A549 (cell line): ENCODE measurements at regions of chr5 and their contacts with region 1.

Region 1: GRCh38 chr5:139633295-139634027 is 14.7 kb upstream of the CXXC5 start:
- DNase-seq: peak; percentile 77 to 79
- ATAC-seq: peak; percentile 70 to 80
- H3K4me3 ChIP-seq: no peak overlapping the region
- H3K27ac ChIP-seq: peak overlapping the region in 1 of 2 experiments; percentile 51; a peak in 3 of 6 replicates
- H3K4me1 ChIP-seq: peaks cover 38% of the 10 kb centered on the region
- CTCF ChIP-seq: peak; percentile 95
- EP300 ChIP-seq: no peak
- POLR2A ChIP-seq: no peak
- RAD21 ChIP-seq: peak; percentile 94 to 95

Region 2: DNA sequence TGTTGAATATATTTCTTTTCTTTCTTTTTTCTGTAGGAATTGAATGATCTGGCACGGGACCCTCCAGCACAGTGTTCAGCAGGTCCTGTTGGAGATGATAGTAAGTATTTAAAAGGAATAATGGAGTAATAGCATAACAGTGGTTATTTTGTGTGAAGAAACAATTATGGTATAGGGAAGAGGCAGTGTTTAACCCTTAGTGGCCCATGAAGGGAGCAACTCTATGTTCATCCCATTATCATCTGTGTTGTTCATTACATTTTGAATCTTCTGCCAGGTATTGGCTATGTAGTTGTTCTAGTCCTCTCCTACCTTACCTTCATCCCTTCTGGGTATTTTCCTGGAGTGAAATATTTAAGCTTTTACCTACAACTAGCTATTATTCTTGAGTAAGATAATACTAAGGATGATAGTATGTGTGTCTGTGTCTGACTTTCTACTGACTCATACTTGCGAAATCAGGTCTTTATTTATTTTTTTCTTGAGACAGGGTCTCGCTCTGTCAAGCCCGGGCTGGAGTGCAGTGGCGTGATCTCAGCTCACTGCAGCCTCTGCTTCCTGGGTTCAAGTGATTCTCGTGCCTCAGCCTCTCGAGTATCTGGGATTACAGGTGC is 33.0 kb before region 1 on chr5:
- CTCF ChIA-PET with region 1: interaction called, 10 read pairs
- POLR2A ChIA-PET with region 1: no interaction called
- DNase-seq: peak; percentile 35 to 39
- ATAC-seq: peak; percentile 89 to 90
- H3K4me3 ChIP-seq: 0 out of 3 replicates have a peak overlapping the region, but pooled peaks have one; percentile 1
- H3K27ac ChIP-seq: peak overlapping the region; percentile 56 to 74; a peak in 5 of 6 replicates
- H3K4me1 ChIP-seq: peaks cover 27% of the 10 kb centered on the region
- CTCF ChIP-seq: no peak
- EP300 ChIP-seq: no peak
- POLR2A ChIP-seq: no peak
- RAD21 ChIP-seq: 0 out of 5 replicates have a peak, but pooled peaks of 1 of the 2 experiments have one; percentile 11

Region 3: DNA sequence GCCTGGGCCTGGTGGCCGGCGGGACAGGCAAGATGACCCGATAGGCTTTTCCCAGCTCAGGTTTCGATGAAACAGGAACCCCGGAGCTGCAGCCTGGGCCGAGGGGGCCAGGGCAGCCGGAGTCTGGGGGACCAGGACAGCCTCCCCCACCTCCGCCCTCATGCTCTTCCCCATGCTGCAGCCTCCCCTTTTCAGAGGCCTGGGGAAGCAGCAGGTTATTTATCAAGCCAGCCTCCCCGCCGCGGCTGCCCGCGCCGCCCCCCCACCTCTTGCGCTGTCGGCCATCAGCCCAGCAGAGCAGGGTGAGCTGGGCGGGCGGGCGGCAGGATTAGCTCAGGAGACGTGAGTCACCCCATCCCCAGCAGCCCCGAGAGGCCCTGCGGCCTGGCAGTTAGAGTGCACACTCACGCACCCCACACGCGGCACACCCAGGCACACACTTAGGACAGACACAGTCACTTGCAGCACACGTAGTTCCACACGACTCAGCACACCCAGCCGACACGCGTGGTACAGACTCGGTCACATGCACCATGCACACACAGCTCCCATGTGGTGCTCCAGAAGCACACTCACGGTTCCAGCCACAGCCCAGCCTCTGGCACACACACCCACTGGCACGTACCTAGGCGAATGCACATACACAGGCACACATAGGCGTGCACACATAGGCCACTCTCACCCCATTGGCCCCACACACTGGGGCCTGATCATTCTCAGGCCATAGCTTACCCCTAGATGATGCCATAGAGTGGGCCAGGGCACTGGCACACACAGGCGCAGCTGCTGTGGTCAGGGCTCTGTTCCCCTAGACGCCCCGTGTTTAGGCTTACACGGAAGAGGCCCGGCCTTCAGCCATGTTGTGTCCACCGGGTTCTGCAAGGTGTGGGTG is 27.7 kb after region 1 on chr5:
- CTCF ChIA-PET with region 1: interaction called, 195 read pairs
- POLR2A ChIA-PET with region 1: no interaction called
- DNase-seq: peak in 1 of 2 experiments; percentile 64
- ATAC-seq: peak; percentile 62 to 64
- H3K4me3 ChIP-seq: peak overlapping the region; percentile 31; the same call in 2 of the 3 replicates
- H3K27ac ChIP-seq: peak overlapping the region; percentile 87 to 98
- H3K4me1 ChIP-seq: peaks cover 84% of the 10 kb centered on the region
- CTCF ChIP-seq: no peak
- EP300 ChIP-seq: no peak
- POLR2A ChIP-seq: no peak
- RAD21 ChIP-seq: no peak

Region 4: GRCh38 chr5:139696894-139697658 is 63.6 kb after region 1 on chr5:
- CTCF ChIA-PET with region 1: interaction called, 248 read pairs
- POLR2A ChIA-PET with region 1: no interaction called
- DNase-seq: peak in 1 of 2 experiments; percentile 35
- ATAC-seq: peak in 1 of 2 experiments; percentile 18; a peak in 3 of 6 replicates
- H3K4me3 ChIP-seq: no peak overlapping the region
- H3K27ac ChIP-seq: peak overlapping the region; percentile 38 to 80; a peak in 4 of 6 replicates
- H3K4me1 ChIP-seq: peaks cover 41% of the 10 kb centered on the region
- CTCF ChIP-seq: no peak
- EP300 ChIP-seq: no peak
- POLR2A ChIP-seq: no peak
- RAD21 ChIP-seq: no peak

Region 5: DNA sequence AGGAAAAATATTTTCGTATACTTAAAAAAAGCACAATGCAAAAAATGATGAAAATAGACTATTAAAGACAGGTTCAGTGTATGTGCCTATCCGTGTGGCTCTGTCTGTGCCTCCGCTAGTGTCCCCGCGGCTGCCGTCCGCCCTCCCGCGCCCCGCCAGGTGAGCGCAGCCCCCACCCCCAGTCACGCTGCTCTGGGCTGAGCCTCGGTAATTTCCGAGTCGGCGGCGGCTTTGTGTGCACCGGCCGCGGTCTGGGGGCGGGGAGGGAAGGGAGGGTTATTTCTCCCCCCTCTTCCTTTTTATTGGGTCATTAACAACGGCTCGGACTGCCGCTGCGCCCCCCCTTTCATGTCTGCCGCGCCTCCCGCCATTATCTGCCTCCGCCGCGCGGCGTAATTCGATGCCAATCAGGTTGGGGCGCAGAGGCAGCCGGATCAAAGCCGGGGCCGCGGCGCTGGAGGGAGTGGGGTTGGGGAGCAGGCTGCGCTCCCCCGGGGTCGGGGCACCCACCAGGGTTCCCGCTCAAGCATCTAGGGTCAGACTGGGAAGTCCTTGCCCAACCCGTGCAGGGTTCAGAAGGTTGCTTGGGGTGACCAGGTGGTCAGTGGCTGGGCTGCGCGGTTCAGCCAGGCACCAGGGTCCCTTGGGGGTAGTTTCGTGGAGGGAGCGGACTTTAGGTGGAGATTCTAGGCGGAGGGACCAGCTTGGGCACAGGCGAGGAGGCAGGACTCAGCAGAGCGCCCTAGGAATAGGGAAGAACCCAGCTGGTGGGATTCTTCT is 122.6 kb after region 1 on chr5:
- CTCF ChIA-PET with region 1: interaction called, 24 read pairs
- POLR2A ChIA-PET with region 1: no interaction called
- DNase-seq: no peak
- ATAC-seq: no peak
- H3K4me3 ChIP-seq: peak overlapping the region; percentile 34
- H3K27ac ChIP-seq: peak overlapping the region in 1 of 2 experiments; percentile 66; a peak in 3 of 6 replicates
- H3K4me1 ChIP-seq: peaks cover 10% of the 10 kb centered on the region; the same call in 1 of the 3 replicates
- CTCF ChIP-seq: no peak
- EP300 ChIP-seq: no peak
- POLR2A ChIP-seq: no peak
- RAD21 ChIP-seq: no peak